ENCODE measurements at regions of chr20 and their contacts with region 1.

Region 1: DNA sequence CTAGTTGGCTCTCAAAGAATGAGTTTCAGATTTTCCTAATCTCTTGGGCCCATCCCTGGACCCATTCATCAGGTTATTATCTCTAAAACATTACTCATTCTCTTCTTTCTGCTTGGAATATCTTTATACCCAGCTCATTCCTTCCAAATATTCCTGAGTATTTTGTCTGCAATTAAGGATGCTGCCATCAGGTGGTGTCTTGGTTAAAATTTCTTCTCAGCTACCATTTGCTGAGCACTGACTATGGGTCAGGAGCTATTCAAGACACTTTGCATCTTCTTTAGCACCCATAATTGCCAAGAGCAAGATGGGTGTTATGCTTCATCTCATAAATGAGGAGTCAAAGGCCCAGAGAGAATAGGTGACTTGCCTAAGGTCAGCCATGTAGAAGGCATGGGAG is 8.4 kb downstream of the SUN5 start:
- DNase-seq: no peak
- ATAC-seq: no peak
- H3K4me3 Mint-ChIP-seq: no peak overlapping the region
- H3K27ac Mint-ChIP-seq: no peak overlapping the region
- H3K4me1 Mint-ChIP-seq: no peaks in the 10 kb centered on the region
- H3K27me3 Mint-ChIP-seq: no peaks in the 10 kb centered on the region
- CTCF ChIP-seq: 0 out of 2 replicates have a peak, but pooled peaks have one; percentile 20

Region 2: GRCh38 chr20:32972181-32973076 is 23.4 kb before region 1 on chr20:
- CTCF ChIA-PET with region 1: interaction called, 23 read pairs
- POLR2A ChIA-PET with region 1: no interaction called
- DNase-seq: no peak
- ATAC-seq: peak; percentile 10; the same call in 1 of the 2 replicates
- H3K4me3 Mint-ChIP-seq: no peak overlapping the region
- H3K27ac Mint-ChIP-seq: no peak overlapping the region; the same call in 1 of the 2 replicates
- H3K4me1 Mint-ChIP-seq: peaks cover 19% of the 10 kb centered on the region; the same call in 1 of the 2 replicates
- H3K27me3 Mint-ChIP-seq: no peaks in the 10 kb centered on the region; the same call in 1 of the 2 replicates
- CTCF ChIP-seq: no peak

Region 3: GRCh38 chr20:32982617-32983458 is 13.0 kb before region 1 on chr20:
- CTCF ChIA-PET with region 1: interaction called, 16 read pairs
- POLR2A ChIA-PET with region 1: no interaction called
- DNase-seq: no peak
- ATAC-seq: no peak
- H3K4me3 Mint-ChIP-seq: no peak overlapping the region
- H3K27ac Mint-ChIP-seq: no peak overlapping the region
- H3K4me1 Mint-ChIP-seq: 0 out of 2 replicates have a peak, but pooled peaks cover 7% of the 10 kb centered on the region
- H3K27me3 Mint-ChIP-seq: no peaks in the 10 kb centered on the region
- CTCF ChIP-seq: no peak

Region 4: GRCh38 chr20:33097001-33097400 is 101.2 kb after region 1 on chr20:
- CTCF ChIA-PET with region 1: interaction called, 19 read pairs
- POLR2A ChIA-PET with region 1: no interaction called
- DNase-seq: no peak
- ATAC-seq: no peak
- H3K4me3 Mint-ChIP-seq: no peak overlapping the region
- H3K27ac Mint-ChIP-seq: no peak overlapping the region
- H3K4me1 Mint-ChIP-seq: no peaks in the 10 kb centered on the region
- H3K27me3 Mint-ChIP-seq: no peaks in the 10 kb centered on the region
- CTCF ChIP-seq: no peak